ENCODE measurements at regions of chr5 and their contacts with region 1.

Region 1: DNA sequence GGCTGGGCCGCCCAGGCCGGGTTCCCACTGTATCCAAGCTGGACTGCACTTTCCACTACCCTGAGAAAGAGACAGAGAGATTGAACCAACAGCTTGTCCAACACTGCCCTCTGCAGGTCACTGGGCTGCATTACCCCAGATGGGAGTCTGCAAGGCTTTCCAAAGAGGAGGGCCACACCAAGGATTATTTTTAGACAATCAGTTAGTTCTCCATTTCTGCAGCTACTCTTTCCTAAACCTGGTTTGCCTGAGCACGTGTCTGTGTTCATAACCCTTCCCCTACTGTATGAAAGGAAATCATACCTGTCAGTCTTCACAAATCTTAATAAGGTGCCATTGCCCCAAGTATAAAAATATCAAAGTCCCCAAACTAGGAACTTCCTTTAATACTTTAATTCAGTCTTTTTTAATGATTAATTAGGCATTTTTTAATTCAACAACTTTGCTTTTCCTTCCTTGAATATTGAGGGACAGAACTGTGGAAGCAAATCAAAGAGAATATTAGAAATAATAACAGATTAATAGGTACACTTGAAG is 13.4 kb upstream of the FGF1 start:
- DNase-seq: peak; percentile 63 to 87 (median 86)
- ATAC-seq: peak; percentile 98
- H3K4me3 ChIP-seq: no peak overlapping the region
- H3K4me1 ChIP-seq: no peaks in the 10 kb centered on the region
- CTCF ChIP-seq: peak; percentile 96

Region 2: GRCh38 chr5:142611154-142611553 is 88.1 kb before region 1 on chr5:
- intact Hi-C with region 1: loop called in 1 of 2 experiments (anchors 2 kb)
- DNase-seq: peak in 2 of 3 donors; percentile 72 to 86
- ATAC-seq: peak; percentile 86
- H3K4me3 ChIP-seq: no peak overlapping the region
- H3K4me1 ChIP-seq: no peaks in the 10 kb centered on the region
- CTCF ChIP-seq: peak; percentile 72

Region 3: GRCh38 chr5:142655339-142656267 is 43.6 kb before region 1 on chr5:
- intact Hi-C with region 1: loop called (anchors 2 to 5 kb)
- DNase-seq: peak; percentile 68 to 87 (median 83)
- ATAC-seq: peak; percentile 92
- H3K4me3 ChIP-seq: no peak overlapping the region
- H3K4me1 ChIP-seq: no peaks in the 10 kb centered on the region
- CTCF ChIP-seq: peak; percentile 88

Measured in mucosa of descending colon (tissue), 3 donors.